Left colon (tissue), 2 donors: ENCODE measurements at regions of chr14 and their contacts with region 1.

Region 1: DNA sequence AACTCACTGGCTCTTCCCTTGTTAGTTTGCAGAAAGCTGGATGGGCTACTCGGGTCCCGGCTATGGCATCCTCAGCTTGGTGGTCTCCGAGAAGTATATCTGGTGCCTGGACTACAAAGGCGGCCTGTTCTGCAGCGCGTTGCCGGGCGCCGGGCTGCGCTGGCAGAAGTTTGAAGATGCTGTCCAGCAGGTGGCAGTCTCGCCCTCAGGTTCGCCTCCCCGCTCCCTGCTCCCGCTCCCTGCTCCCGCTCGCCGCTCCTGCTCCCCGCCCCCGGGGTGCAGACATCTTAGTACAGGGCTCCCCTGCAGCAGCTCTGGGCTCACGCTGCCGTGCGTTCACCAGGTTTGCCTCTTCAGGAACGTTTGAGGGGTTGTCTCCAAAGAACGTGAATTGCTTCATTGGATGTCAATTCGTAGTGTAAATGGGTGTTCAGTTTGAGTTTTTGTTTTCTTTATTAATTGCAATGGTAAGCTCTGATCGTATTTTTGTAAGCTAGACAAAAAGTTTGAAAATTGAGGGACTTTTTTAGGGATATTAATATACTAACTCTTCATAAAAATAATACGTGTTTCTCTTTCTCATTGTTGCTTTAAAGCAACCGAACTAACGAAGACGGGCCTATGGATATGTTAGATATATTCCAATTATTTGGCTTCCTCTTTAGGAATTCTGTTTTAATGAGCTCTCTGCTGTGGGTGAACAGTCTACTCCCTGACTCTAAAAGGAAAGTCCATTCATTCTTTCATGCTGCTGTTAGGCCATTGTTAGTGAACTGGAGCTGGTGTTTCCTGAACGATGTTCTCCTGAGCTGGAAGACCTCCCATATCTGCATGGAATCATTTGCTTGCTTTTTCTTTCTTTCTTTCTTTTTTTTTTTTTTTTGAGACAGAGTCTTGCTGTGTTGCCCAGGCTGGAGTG is 71.3 kb downstream of the ANKRD9 start:
- DNase-seq: peak; percentile 86 to 94
- ATAC-seq: peak; percentile 57

Region 2: DNA sequence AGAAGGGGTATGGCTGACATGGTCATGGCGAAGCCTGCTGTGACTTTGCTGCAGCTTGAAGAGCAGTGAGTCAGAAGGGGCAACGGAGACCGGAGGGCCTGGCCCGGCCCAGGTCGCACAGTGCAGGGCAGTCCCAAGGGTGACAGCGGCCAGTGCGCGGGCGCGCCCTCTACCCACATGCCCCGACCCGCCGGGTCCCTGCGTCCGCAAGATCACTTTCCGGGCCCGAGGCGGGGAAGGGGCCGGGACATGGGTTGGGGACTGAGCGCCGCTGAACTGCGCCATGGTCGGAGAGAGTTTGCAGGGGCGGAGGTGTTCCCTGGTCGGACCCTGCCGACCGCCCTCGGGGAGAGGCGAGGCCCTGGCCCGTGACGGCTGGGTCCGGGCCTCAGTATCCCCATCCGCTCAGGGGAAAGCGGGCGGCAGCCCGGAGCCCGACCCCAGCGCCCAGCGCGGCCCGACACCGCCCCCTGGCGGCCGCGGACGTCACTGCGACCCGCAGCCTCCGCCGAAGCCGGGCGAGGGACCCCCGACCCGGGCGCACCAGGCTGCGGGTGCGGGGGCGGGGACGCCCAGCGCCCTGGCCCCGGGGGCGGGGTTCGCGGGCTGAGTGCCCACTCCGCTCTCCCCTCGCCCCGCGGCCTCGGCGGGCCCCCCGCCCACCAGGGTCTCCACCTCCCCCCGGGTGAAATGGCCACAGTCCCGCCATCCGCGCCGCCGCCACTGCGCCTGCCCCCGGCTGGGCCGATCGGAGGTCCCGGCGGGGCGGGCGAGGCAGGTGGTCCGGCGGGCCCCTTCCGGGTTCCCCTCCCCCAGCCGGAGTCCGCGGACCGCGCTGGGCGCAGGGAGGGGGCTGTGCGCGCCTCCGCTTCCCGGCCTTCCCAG is 78.5 kb after region 1 on chr14:
- intact Hi-C with region 1: loop called (anchors 2 to 5 kb)
- DNase-seq: peak; percentile 37 to 73
- ATAC-seq: peak; percentile 69